Calu3 (cell line): ENCODE measurements at regions of chr17 and their contacts with region 1.

Region 1: DNA sequence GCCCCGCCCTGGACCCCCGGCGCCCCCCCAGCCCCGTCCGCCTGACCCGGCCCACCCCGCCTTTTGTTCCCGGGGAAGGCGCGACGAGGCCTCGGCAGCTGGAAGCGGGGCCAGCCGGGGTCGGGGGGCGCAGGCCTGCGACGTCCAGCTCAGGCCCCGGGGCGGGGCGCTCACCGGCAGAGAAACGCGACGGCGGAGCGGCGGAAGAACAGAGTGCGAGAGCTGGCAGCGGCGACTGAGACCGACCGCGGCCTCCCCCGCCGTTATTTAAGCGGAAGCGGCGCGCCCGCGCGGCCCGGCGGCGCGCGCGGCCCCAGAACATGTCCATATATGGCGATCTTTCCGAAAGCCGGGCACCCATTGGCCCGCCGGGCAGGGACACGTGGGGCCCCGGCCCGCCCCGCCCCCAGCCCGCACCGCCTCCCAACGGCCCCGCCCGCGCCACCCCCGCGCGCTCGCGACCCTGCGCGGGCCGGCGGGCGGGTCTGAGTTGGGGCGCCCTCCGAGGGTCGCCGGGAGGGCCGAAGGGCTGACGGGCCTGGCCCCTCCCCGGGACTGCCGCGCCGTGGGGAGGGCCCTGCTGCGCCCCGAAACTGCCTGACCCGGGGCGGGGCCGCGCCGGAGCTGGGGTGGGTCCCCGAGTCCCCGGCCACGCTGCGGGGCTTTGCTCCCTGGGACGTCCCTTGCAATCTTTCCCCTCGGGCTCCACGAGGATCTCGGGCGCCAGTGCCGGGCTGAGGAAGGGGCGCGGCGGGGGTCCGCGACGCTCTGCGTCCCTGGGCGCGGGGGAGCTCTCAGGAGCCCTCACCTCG is at the start of gene ACTG1:
- DNase-seq: peak; percentile 93
- H3K4me3 Mint-ChIP-seq: peak within 1 kb of the TSS; percentile 100
- H3K27ac Mint-ChIP-seq: peak within 1 kb of the TSS; percentile 100
- H3K4me1 Mint-ChIP-seq: peaks cover 27% of the 10 kb centered on the region
- H3K27me3 Mint-ChIP-seq: no peaks in the 10 kb centered on the region
- CTCF ChIP-seq: no peak
- total RNA-seq, gene ACTG1: 2,184 and 2,327 TPM in 2 replicates

Region 2: DNA sequence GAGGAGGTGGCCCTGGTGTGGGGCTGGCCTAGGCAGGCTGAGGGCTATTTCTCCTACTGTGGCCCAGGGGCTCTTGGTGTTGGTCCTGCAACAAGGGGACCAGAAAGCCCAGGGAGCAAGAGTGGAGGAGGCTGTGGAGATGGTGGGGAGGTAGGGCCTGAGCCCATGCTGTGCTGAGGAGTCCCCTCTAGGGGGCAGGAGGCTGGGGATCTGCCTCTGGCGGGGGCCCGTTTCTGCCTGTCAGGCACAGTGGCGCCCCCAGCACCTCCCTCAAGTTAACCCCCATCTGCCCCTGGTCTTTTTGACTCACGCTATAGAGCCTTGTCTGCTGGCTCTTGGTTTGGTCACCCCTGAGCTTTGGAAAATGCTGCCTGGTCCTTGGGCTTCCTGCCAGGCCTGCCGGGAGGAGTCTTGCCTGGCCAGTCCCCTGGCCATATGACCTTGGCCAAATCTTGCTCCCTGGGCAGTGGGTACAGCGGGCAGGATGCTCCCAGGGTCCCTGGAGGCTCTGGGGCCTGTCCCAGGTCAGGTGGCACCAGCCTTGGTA is 471.9 kb before region 1 on chr17:
- CTCF ChIA-PET with region 1: no interaction called
- intact Hi-C with region 1: loop called (anchors 10 kb)
- DNase-seq: peak; percentile 53
- H3K4me3 Mint-ChIP-seq: peak overlapping the region; percentile 21
- H3K27ac Mint-ChIP-seq: no peak overlapping the region
- H3K4me1 Mint-ChIP-seq: peaks cover 76% of the 10 kb centered on the region
- H3K27me3 Mint-ChIP-seq: no peaks in the 10 kb centered on the region
- CTCF ChIP-seq: peak; percentile 23

Region 3: GRCh38 chr17:81576621-81577277 is 64.0 kb after region 1 on chr17:
- CTCF ChIA-PET with region 1: no interaction called
- intact Hi-C with region 1: no loop called
- DNase-seq: peak; percentile 60
- H3K4me3 Mint-ChIP-seq: peak overlapping the region; percentile 58
- H3K27ac Mint-ChIP-seq: peak overlapping the region; percentile 89
- H3K4me1 Mint-ChIP-seq: peaks cover 39% of the 10 kb centered on the region
- H3K27me3 Mint-ChIP-seq: no peaks in the 10 kb centered on the region
- CTCF ChIP-seq: no peak